ENCODE measurements at regions of chr10 and their contacts with region 1.

Region 1: DNA sequence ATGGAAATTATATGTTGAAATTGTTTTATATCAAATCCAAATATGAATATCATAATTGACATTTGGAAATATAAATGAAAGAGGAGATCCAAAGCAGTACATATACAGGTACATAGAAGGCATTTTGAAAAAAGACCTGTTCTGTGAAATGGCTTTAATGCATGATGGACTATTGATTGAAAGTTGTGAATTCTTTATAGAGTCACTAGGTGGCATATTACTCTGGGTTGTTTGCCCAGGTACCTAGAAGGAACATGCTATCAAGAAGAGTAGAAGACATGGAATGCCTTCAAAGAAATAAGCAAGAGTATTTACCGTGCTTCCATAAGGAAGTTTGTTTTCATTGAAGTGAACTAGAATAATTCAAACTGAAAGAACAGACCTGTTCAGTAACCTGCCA is 160.0 kb upstream of the ANK3 start:
- DNase-seq: no peak
- ATAC-seq: peak; percentile 70 to 71
- H3K4me3 ChIP-seq: no peak overlapping the region
- H3K27ac ChIP-seq: no peak overlapping the region
- H3K4me1 ChIP-seq: no peaks in the 10 kb centered on the region
- H3K27me3 ChIP-seq: no peaks in the 10 kb centered on the region
- CTCF ChIP-seq: peak in 4 of 5 experiments; percentile 30 to 52 (median 34)
- POLR2A ChIP-seq: no peak

Region 2: DNA sequence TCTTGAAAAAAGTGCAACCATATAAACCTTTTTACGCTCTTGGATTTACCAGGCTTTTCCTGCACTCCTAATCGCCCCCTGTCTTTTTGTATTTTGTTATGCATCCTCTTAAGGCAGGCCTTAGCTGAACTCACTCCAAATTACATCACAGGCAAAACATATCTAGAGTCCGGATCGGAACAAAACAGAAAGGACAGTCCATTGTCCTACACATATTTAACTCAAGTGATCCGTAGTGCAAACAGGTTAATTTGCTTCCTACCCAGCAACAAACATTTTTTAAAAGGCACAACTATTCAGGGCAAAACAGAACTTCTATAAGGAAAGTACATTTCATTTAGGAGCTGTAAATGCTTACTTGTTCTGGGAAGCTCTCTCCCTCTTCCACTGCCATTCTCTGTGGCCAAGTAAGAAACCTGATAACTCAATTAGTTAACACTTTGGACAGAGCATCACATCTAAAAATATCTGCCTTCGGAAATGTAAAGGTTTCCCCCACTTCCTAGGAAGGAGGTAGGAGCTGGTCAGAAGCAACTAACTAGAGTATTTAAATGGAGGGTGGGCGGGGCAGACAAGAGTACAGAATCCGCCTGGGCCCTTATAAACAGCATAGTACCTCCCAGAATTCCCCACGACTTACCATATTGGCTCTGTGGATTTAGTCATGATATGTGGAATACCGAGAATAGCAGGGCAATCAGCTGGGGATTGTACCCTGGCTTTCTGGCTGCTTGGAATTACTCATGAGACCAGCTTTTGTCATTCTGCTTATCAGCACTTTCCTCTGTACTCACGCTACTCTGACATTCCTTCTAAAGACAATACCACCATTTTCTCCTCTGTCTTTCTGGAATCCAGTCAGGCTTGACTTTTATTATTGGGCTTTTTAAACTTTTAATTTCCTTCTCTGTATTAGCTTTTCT is 249.5 kb before region 1 on chr10:
- in situ Hi-C with region 1: no loop called
- intact Hi-C with region 1: no loop called
- DNase-seq: no peak
- ATAC-seq: peak; percentile 36 to 45
- H3K4me3 ChIP-seq: peak overlapping the region; percentile 6 to 51 (median 44)
- H3K27ac ChIP-seq: peak overlapping the region in 1 of 4 donors; percentile 55
- H3K4me1 ChIP-seq: peaks cover 5 to 9% of the 10 kb centered on the region in 2 donors
- H3K27me3 ChIP-seq: no peaks in the 10 kb centered on the region
- CTCF ChIP-seq: no peak
- POLR2A ChIP-seq: no peak

Region 3: GRCh38 chr10:60629332-60629731 is 79.6 kb after region 1 on chr10:
- in situ Hi-C with region 1: no loop called
- intact Hi-C with region 1: no loop called
- DNase-seq: no peak
- ATAC-seq: no peak
- H3K4me3 ChIP-seq: no peak overlapping the region
- H3K27ac ChIP-seq: no peak overlapping the region
- H3K4me1 ChIP-seq: no peaks in the 10 kb centered on the region
- H3K27me3 ChIP-seq: no peaks in the 10 kb centered on the region
- CTCF ChIP-seq: no peak
- POLR2A ChIP-seq: no peak

Region 4: DNA sequence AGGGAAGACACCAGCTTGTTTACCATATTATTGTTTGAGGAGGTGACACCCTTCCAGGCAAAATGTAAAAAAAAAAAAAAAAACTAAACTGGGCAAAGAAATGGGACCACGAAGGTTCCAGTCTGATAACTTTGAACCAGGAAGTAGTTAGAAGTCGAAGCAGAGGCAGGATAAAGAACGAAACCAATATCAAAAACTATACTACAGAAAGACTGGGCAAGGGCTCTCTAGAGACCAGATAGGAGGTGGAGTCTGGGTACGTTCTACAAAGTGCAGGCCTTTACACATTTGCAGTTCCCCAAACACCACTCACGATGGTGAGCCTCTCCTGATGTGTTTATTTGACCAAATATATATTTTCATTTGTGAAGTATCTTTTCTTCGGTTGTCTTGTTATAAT is 102.9 kb after region 1 on chr10:
- in situ Hi-C with region 1: loop called in 2 of 4 experiments (anchors 5 to 10 kb)
- intact Hi-C with region 1: loop called (anchors 1 kb)
- DNase-seq: no peak
- ATAC-seq: no peak
- H3K4me3 ChIP-seq: no peak overlapping the region
- H3K27ac ChIP-seq: no peak overlapping the region
- H3K4me1 ChIP-seq: no peaks in the 10 kb centered on the region
- H3K27me3 ChIP-seq: no peaks in the 10 kb centered on the region
- CTCF ChIP-seq: no peak
- POLR2A ChIP-seq: no peak

Region 5: DNA sequence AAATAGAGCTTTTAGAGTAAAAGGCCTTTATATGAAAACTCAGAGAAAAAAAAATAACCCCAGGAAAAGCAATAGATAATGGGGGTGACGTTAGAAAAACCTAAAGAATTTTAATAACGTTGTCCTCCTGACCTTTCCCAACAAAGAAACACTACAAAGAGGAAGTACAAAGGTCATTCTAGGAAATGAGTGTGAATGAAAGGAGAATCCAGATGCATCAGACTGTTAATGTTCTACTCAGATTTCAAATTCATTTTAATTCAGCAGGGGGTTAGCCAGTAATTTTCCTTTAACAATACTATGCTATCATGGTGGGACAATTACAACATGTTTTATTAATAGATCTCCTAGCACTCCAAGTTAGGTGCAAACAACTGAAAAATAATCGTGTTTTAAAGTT is 154.8 kb after region 1 on chr10:
- in situ Hi-C with region 1: no loop called
- intact Hi-C with region 1: no loop called
- DNase-seq: no peak
- ATAC-seq: no peak
- H3K4me3 ChIP-seq: no peak overlapping the region
- H3K27ac ChIP-seq: no peak overlapping the region
- H3K4me1 ChIP-seq: no peaks in the 10 kb centered on the region
- H3K27me3 ChIP-seq: no peaks in the 10 kb centered on the region
- CTCF ChIP-seq: no peak
- POLR2A ChIP-seq: no peak

Measured in gastrocnemius medialis (tissue), 4 donors.